PC-9 (cell line): ENCODE measurements at regions of chr16 and their contacts with region 1.

Region 1: DNA sequence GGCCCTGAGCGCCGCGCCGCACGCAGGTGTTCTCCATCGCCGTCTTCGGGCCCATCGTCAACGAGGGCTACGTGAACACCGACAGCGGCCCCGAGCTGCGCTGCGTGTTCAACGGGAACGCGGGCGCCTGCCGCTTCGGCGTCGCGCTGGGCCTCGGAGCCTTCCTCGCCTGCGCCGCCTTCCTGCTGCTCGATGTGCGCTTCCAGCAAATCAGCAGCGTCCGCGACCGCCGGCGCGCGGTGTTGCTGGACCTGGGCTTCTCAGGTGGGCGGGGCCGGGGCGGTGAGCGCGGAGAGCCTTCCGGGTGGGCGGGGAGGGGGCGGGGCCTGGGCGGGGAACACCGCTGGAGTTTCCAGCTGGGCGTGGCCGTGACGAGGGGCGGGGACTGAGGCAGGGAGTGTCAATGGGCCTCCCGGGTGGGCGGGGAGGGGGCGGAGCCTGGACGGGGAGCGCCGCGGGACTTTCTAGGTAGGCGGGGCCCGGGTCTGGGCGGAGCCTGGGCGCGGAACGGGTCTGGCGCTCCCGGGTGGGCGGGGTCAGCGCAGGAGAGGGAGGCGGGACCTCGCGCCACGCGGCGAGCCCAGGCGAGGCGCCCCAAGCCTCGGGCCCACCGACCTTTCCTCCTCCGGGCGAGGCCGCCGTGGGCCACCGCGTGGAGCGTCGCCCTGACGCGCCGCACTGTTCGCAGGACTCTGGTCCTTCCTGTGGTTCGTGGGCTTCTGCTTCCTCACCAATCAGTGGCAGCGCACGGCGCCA is 2.4 kb downstream of the SYNGR3 start:
- DNase-seq: peak; percentile 60 to 94
- H3K4me3 ChIP-seq: no peak overlapping the region
- H3K27ac ChIP-seq: no peak overlapping the region
- H3K4me1 ChIP-seq: peaks cover 30% of the 10 kb centered on the region
- H3K27me3 ChIP-seq: no peaks in the 10 kb centered on the region
- CTCF ChIP-seq: no peak

Region 2: GRCh38 chr16:1942810-1943726 is 49.1 kb before region 1 on chr16 and contains the start of gene MSRB1:
- CTCF ChIA-PET with region 1: no interaction called
- POLR2A ChIA-PET with region 1: no interaction called
- intact Hi-C with region 1: no loop called
- DNase-seq: peak; percentile 93 to 100
- H3K4me3 ChIP-seq: peak within 1 kb of the TSS; percentile 81
- H3K27ac ChIP-seq: peak within 1 kb of the TSS; percentile 61
- H3K4me1 ChIP-seq: peaks cover 18% of the 10 kb centered on the region
- H3K27me3 ChIP-seq: no peaks in the 10 kb centered on the region
- CTCF ChIP-seq: no peak
- total RNA-seq, gene MSRB1: 49.4 and 54.9 TPM in 2 replicates

Region 3: DNA sequence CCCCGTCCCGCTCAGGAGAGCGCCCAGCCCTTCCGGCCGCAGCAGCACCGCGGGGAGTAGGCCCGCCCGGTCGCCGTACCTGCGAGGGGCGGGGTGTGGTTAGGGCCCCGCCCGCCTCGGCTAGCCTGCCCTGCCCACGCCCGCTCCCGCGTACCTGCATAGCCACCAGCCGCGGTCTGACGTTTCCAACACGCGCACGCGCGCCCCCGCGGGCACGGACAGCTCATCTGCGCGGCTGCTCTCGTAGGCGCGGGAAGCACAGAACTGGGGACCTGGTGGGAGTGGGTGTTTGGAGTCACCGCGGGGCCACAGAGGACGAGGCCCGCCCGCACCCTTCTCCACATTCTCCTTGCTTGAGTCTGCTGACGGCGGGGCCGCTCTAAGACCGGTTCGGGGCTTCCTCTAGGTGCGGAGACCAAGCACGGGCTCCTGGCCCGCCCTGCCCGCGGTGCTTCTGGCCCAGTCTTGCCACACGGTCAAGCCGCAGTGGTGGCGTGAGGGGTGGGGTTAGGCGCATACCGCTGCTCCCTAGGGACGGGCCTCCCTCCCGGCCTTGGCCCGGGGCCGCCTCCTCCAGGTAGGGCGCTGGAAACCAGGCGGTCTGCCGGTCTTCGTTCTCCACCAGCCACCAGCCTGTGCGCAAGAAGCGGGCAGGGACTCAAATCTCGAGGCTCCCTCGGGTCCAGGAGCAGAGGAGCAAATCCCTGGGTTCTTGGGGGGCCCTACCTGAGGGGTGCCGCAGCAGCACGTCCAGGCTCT is 12.7 kb before region 1 on chr16:
- CTCF ChIA-PET with region 1: no interaction called
- POLR2A ChIA-PET with region 1: no interaction called
- intact Hi-C with region 1: no loop called
- DNase-seq: peak; percentile 77 to 97
- H3K4me3 ChIP-seq: peak overlapping the region; percentile 55
- H3K27ac ChIP-seq: peak overlapping the region; percentile 62
- H3K4me1 ChIP-seq: peaks cover 51% of the 10 kb centered on the region
- H3K27me3 ChIP-seq: no peaks in the 10 kb centered on the region
- CTCF ChIP-seq: no peak; the same call in 1 of the 2 replicates

Region 4: GRCh38 chr16:2040787-2041522 is 48.8 kb after region 1 on chr16:
- CTCF ChIA-PET with region 1: no interaction called
- POLR2A ChIA-PET with region 1: interaction called, 14 read pairs
- intact Hi-C with region 1: no loop called
- DNase-seq: peak; percentile 94 to 96
- H3K4me3 ChIP-seq: no peak overlapping the region
- H3K27ac ChIP-seq: peak overlapping the region; percentile 95
- H3K4me1 ChIP-seq: peaks cover 45% of the 10 kb centered on the region
- H3K27me3 ChIP-seq: no peaks in the 10 kb centered on the region
- CTCF ChIP-seq: no peak